CD4-positive, alpha-beta memory T cell (primary cell): ENCODE measurements at regions of chr2 and their contacts with region 1.

Region 1: GRCh38 chr2:241123816-241124536 is 21.9 kb upstream of the MTERF4 start:
- DNase-seq: peak; percentile 52 to 74 (median 61)
- H3K4me3 ChIP-seq: no peak overlapping the region
- H3K4me3 Mint-ChIP-seq: peak overlapping the region; percentile 43 to 81 (median 70)
- H3K27ac ChIP-seq: peak overlapping the region; percentile 29
- H3K27ac Mint-ChIP-seq: peak overlapping the region; percentile 80 to 95 (median 89)
- H3K4me1 ChIP-seq: peaks cover 47% of the 10 kb centered on the region
- H3K4me1 Mint-ChIP-seq: peaks cover 21 to 42% (median 33%) of the 10 kb centered on the region in 4 donors
- H3K27me3 ChIP-seq: no peaks in the 10 kb centered on the region
- H3K27me3 Mint-ChIP-seq: no peaks in the 10 kb centered on the region

Region 2: GRCh38 chr2:241102239-241102803 is 21.7 kb before region 1 on chr2 and contains the start of gene MTERF4:
- CTCF ChIA-PET with region 1: no interaction called
- POLR2A ChIA-PET with region 1: interaction called, 72 read pairs
- intact Hi-C with region 1: no loop called
- DNase-seq: peak; percentile 85 to 88 (median 86)
- H3K4me3 ChIP-seq: peak within 1 kb of the TSS; percentile 92 to 94
- H3K4me3 Mint-ChIP-seq: peak within 1 kb of the TSS; percentile 94 to 98 (median 96)
- H3K27ac ChIP-seq: peak within 1 kb of the TSS; percentile 92
- H3K27ac Mint-ChIP-seq: peak within 1 kb of the TSS; percentile 97 to 99 (median 98)
- H3K4me1 ChIP-seq: peaks cover 88% of the 10 kb centered on the region
- H3K4me1 Mint-ChIP-seq: peaks cover 32 to 88% (median 62%) of the 10 kb centered on the region in 4 donors
- H3K27me3 ChIP-seq: no peaks in the 10 kb centered on the region
- H3K27me3 Mint-ChIP-seq: no peaks in the 10 kb centered on the region
- total RNA-seq, gene MTERF4: 204 to 227 TPM

Region 3: DNA sequence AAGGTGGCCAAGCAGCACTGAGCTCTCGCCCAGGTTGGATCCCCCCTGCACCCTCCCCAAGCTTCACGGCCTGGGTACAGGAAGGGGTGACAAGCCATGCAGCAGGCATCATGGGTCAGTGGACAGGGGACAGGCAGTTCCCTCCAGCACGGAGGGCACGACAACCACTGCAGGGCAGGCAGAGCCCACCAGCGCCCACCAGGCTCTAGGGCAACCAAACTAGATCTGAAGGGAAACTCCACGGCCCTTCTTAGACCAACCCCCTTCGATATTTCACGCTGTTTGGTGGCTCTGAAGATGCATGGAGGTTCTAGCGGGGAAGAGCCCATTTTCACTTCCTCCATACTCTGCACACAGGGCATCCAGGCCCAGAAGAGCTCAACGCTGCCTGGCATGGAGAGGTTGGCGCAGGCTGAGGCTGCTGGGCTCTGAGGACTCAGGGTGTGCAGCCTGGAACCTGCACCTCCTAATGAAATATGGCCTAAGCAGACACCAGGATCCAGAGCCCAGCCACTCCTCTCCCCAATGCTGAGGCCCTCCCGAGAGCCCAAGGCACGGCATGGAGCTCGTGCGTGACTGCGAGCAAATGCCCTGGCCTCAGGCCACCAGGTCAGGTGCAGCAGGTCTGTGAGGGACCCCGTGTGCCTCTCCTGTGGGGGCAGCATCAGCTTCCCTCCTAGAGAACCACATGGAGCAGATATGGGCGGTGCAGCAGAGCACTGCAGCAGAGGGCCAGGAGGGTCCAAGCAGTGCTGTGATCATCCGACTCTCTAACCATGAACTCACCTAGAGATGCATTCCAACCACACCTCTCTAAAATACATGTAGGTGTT is 13.2 kb before region 1 on chr2:
- CTCF ChIA-PET with region 1: interaction called, 5 read pairs
- POLR2A ChIA-PET with region 1: interaction called, 72 read pairs
- intact Hi-C with region 1: loop called (anchors 2 kb)
- DNase-seq: peak in 1 of 5 donors; percentile 33
- H3K4me3 ChIP-seq: peak overlapping the region; percentile 48 to 51
- H3K4me3 Mint-ChIP-seq: peak overlapping the region; percentile 89 to 98 (median 93)
- H3K27ac ChIP-seq: peak overlapping the region; percentile 64
- H3K27ac Mint-ChIP-seq: peak overlapping the region; percentile 93 to 99 (median 97)
- H3K4me1 ChIP-seq: peaks cover 60% of the 10 kb centered on the region
- H3K4me1 Mint-ChIP-seq: peaks cover 35 to 69% (median 53%) of the 10 kb centered on the region in 4 donors
- H3K27me3 ChIP-seq: no peaks in the 10 kb centered on the region
- H3K27me3 Mint-ChIP-seq: no peaks in the 10 kb centered on the region

Region 4: GRCh38 chr2:241142593-241142992 is 18.6 kb after region 1 on chr2:
- CTCF ChIA-PET with region 1: interaction called, 10 read pairs
- POLR2A ChIA-PET with region 1: interaction called, 4 read pairs
- intact Hi-C with region 1: no loop called
- DNase-seq: no peak
- H3K4me3 ChIP-seq: no peak overlapping the region
- H3K4me3 Mint-ChIP-seq: no peak overlapping the region
- H3K27ac ChIP-seq: no peak overlapping the region
- H3K27ac Mint-ChIP-seq: no peak overlapping the region
- H3K4me1 ChIP-seq: peaks cover under 1% of the 10 kb centered on the region
- H3K4me1 Mint-ChIP-seq: peaks cover 5 to 21% (median 12%) of the 10 kb centered on the region in 4 donors
- H3K27me3 ChIP-seq: no peaks in the 10 kb centered on the region
- H3K27me3 Mint-ChIP-seq: no peaks in the 10 kb centered on the region